ENCODE measurements at regions of chr15 and their contacts with region 1.

Region 1: DNA sequence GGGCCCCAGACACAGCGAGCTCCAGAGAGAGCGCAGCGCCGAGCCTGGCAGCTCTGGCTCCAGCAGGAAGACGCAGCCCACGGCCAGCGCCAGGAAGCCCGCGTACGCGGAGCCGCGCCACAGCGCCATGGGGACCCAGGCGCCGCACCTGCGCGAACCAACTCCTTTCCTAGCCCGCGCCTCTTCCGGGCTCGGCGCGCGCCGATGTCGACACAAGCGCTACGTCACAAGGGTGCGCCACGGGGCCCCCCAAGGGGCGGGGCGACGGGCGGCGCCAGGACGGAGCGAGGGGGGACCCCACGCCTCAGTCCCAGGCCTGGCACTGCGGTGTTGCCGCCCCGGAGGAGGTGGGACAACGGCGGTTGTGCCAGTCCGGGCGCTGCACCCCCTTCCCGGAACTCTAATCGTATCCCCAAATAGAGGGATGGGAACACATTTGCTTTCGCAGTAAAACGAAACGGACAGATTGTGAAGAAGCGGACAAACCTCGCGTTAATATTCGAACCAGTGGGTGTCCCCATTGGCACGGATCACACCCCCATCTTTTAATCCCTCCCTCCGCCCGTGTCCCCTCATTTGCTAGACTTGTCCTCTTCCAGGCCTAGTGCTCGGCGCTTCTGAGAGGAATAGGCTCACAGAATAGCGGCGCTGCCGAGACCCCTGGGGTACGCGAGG is at the start of gene ADPGK:
- DNase-seq: peak; percentile 93
- H3K4me3 Mint-ChIP-seq: peak within 1 kb of the TSS; percentile 81
- H3K27ac Mint-ChIP-seq: peak within 1 kb of the TSS; percentile 61
- H3K4me1 Mint-ChIP-seq: peaks cover 22% of the 10 kb centered on the region
- H3K27me3 Mint-ChIP-seq: no peaks in the 10 kb centered on the region
- CTCF ChIP-seq: no peak
- total RNA-seq, gene ADPGK: 41.6 and 53.7 TPM in 2 replicates

Region 2: GRCh38 chr15:72168111-72168808 is 615.4 kb before region 1 on chr15:
- CTCF ChIA-PET with region 1: no interaction called
- POLR2A ChIA-PET with region 1: no interaction called
- intact Hi-C with region 1: no loop called
- DNase-seq: peak; percentile 54
- H3K4me3 Mint-ChIP-seq: peak overlapping the region; percentile 46
- H3K27ac Mint-ChIP-seq: peak overlapping the region; percentile 95
- H3K4me1 Mint-ChIP-seq: peaks cover 22% of the 10 kb centered on the region
- H3K27me3 Mint-ChIP-seq: no peaks in the 10 kb centered on the region
- CTCF ChIP-seq: no peak

Region 3: GRCh38 chr15:72771329-72771725 is 12.4 kb before region 1 on chr15:
- CTCF ChIA-PET with region 1: interaction called, 3 read pairs
- POLR2A ChIA-PET with region 1: interaction called, 12 read pairs
- intact Hi-C with region 1: no loop called
- DNase-seq: no peak
- H3K4me3 Mint-ChIP-seq: no peak overlapping the region
- H3K27ac Mint-ChIP-seq: no peak overlapping the region
- H3K4me1 Mint-ChIP-seq: peaks cover 6% of the 10 kb centered on the region
- H3K27me3 Mint-ChIP-seq: no peaks in the 10 kb centered on the region
- CTCF ChIP-seq: no peak

Region 4: DNA sequence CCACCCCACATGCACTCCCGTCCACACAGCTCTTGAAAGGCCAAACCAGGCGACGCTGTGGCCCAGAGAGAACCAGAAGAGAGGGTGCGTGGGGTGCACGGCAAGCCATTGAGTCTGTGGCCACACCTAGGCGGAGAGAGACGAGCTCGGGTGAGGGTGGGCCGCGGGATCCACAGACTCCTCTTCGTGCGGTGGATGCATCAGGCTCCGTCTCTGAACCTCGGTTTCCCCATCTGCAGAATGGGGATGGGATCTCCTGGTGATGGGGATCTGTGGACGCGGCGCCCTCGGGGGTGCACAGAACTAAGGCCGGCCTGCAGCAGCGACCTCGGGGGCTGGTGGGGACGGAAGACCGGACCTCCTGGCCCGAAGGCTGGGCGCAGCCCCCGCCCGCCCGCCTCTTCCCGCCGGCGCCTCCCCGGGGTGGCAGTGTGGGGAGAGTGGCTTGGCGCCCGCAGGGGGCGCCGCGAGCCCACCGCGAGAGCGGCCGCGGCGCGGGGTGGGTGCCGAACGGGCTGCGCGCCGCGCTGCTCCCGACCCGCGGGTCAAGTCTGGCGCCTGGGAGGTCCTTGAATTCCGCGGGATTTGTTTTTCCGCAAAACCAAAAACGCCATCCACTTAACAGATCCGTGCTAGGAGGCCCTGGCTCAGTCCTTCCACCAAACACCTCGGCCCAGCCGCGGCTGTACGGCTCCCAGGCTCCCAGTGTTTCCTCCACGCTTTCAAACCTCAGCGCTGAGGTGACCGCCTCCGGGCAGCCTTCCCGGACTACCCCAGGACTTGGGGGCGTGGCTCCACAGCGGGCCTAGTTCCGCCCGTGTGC is 13.0 kb after region 1 on chr15:
- CTCF ChIA-PET with region 1: interaction called, 13 read pairs
- POLR2A ChIA-PET with region 1: interaction called, 5 read pairs
- intact Hi-C with region 1: no loop called
- DNase-seq: peak; percentile 33
- H3K4me3 Mint-ChIP-seq: peak overlapping the region; percentile 65
- H3K27ac Mint-ChIP-seq: no peak overlapping the region
- H3K4me1 Mint-ChIP-seq: no peaks in the 10 kb centered on the region
- H3K27me3 Mint-ChIP-seq: peaks cover 6% of the 10 kb centered on the region
- CTCF ChIP-seq: peak; percentile 56

Region 5: DNA sequence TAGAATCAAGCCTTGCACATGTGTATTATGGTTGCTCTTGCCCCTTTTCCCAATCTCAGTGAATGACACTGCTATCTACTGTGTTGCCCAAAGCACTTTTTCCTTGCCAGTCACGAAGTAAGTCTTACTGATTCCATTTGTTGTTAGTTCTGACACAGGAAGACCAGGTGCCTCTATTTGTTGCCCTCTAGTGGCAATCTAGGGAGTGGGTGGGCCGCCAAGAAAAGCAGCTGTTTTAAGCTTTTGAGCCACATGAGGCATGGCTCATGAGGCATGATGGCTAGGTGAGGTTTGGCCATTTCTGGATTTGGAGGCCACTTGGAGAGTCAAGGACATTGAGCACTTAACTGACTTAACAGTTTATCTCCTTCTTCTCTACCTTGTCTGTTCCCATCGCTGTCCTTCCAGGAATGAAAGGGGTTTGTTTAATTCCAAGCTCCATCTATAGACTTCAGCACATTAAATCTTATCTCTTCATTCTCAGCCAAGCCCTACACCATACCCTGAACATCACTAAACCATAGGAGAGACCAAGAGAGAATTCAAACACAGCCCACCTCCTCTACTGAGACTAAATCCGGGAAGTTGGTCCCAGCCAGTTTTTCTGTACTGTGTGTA is 481.9 kb after region 1 on chr15:
- CTCF ChIA-PET with region 1: no interaction called
- POLR2A ChIA-PET with region 1: no interaction called
- intact Hi-C with region 1: loop called (anchors 1 kb)
- DNase-seq: peak; percentile 67
- H3K4me3 Mint-ChIP-seq: no peak overlapping the region
- H3K27ac Mint-ChIP-seq: no peak overlapping the region
- H3K4me1 Mint-ChIP-seq: no peaks in the 10 kb centered on the region
- H3K27me3 Mint-ChIP-seq: no peaks in the 10 kb centered on the region
- CTCF ChIP-seq: peak; percentile 61

Region 6: DNA sequence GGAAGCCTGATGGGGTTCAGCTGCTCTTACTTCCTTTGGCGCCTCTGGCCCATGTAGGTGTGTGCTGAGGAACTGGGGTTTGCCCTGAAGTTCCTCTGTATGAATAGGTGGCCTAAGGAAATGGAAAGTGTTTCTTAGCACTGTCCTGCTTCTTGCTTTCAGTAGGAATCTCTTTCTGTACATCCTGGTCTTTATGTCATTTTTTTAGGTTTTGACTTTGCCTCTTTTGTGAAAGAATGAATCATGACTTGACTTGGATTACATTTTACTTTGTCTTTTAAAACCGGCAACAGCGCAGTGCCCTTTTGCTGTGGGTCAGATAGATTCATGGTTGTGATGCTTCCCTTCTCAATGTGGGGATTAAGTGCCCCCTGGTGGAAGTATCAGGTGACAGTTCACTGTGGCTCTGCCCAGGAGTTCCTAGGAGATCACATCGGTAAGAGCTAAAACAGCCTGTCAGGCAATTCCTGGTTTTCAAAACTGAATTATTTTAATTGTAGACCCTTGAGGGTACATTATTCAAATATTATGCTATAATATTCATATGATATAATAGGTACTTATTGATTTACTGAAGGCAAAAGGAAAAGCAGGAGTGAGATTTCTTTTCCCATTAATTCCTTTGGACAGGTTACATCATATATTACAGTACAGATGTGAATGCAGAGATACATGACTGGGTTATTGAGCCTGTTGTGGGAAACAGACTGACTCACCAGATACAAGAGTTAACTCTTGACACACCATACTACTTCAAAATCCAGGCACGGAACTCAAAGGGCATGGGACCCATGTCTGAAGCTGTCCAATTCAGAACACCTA is 489.7 kb after region 1 on chr15:
- CTCF ChIA-PET with region 1: interaction called, 3 read pairs
- POLR2A ChIA-PET with region 1: no interaction called
- intact Hi-C with region 1: loop called (anchors 2 kb)
- DNase-seq: peak; percentile 74
- H3K4me3 Mint-ChIP-seq: no peak overlapping the region
- H3K27ac Mint-ChIP-seq: no peak overlapping the region
- H3K4me1 Mint-ChIP-seq: no peaks in the 10 kb centered on the region
- H3K27me3 Mint-ChIP-seq: no peaks in the 10 kb centered on the region
- CTCF ChIP-seq: peak; percentile 71